ENCODE measurements at regions of chr6 and their contacts with region 1.

Region 1: DNA sequence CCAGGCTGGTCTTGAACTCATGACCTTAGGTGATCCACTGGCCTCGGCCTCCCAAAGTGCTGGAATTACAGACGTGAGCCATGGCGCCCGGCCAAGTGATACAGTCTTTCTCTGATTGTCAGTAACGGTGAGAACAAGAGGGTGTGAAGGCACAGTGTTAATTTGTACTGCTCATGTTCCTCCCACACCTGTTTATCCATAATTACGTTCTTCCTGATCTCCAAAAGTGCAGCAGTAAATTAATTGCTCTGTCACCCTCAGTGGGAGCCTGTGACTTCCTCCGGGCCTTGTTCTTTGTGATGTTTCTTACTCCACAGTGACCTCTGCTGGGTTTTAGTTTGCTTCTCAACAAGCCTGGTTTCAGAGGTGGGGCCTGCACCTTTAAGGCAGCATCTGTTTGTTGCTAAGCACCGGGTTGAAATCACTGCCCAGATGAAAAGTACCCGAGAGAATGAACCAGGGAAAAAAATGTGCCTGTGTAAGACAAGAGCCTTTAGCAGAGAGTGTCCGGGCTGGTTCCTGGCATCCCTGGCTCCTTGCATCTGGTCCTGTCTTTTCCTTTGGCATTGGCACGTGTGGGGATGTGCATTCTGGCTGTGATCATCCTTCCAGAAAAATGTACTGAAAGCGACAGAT is 89.1 kb upstream of the CLDN20 start:
- DNase-seq: peak; percentile 79
- ATAC-seq: peak; percentile 75
- H3K4me3 ChIP-seq: no peak overlapping the region
- H3K4me3 Mint-ChIP-seq: no peak overlapping the region
- H3K27ac ChIP-seq: no peak overlapping the region
- H3K27ac Mint-ChIP-seq: no peak overlapping the region
- H3K4me1 ChIP-seq: peaks cover 0 to 23% of the 10 kb centered on the region in 2 donors
- H3K4me1 Mint-ChIP-seq: peaks cover 37% of the 10 kb centered on the region
- H3K27me3 ChIP-seq: no peaks in the 10 kb centered on the region
- H3K27me3 Mint-ChIP-seq: no peaks in the 10 kb centered on the region
- CTCF ChIP-seq: peak; percentile 60

Region 2: DNA sequence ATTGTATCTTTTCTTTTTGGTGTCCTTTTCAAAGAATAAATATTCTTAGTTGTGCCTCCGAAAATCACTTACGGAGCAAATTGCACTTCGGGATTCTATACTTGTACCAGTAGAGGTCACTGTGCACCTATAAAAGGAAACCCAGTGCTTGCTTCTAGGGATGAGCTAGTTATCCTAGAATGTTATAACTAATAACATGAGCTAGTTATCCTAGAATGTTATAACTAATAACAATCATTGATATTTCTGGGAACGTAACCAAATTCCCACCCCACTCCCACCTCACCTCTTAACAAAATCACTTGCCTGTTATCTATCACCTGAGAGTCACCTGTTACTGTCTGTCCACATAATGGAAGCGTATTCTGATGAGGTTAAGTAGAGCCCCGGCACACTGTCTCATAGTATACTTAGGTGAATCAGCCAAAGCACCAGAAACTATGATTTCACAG is 306.5 kb before region 1 on chr6:
- CTCF ChIA-PET with region 1: interaction called, 9 read pairs
- POLR2A ChIA-PET with region 1: no interaction called
- intact Hi-C with region 1: loop called (anchors 1 kb)
- DNase-seq: peak; percentile 44
- ATAC-seq: no peak
- H3K4me3 ChIP-seq: no peak overlapping the region
- H3K4me3 Mint-ChIP-seq: no peak overlapping the region
- H3K27ac ChIP-seq: no peak overlapping the region
- H3K27ac Mint-ChIP-seq: no peak overlapping the region
- H3K4me1 ChIP-seq: no peaks in the 10 kb centered on the region
- H3K4me1 Mint-ChIP-seq: no peaks in the 10 kb centered on the region
- H3K27me3 ChIP-seq: no peaks in the 10 kb centered on the region
- H3K27me3 Mint-ChIP-seq: no peaks in the 10 kb centered on the region
- CTCF ChIP-seq: peak; percentile 72

Region 3: GRCh38 chr6:154928325-154928922 is 246.3 kb before region 1 on chr6:
- CTCF ChIA-PET with region 1: interaction called, 66 read pairs
- POLR2A ChIA-PET with region 1: no interaction called
- intact Hi-C with region 1: no loop called
- DNase-seq: peak; percentile 66
- ATAC-seq: peak; percentile 54
- H3K4me3 ChIP-seq: no peak overlapping the region
- H3K4me3 Mint-ChIP-seq: no peak overlapping the region
- H3K27ac ChIP-seq: no peak overlapping the region
- H3K27ac Mint-ChIP-seq: no peak overlapping the region
- H3K4me1 ChIP-seq: peaks cover 13% of the 10 kb centered on the region in 2 donors
- H3K4me1 Mint-ChIP-seq: peaks cover 19% of the 10 kb centered on the region
- H3K27me3 ChIP-seq: no peaks in the 10 kb centered on the region
- H3K27me3 Mint-ChIP-seq: no peaks in the 10 kb centered on the region
- CTCF ChIP-seq: peak; percentile 88

Region 4: DNA sequence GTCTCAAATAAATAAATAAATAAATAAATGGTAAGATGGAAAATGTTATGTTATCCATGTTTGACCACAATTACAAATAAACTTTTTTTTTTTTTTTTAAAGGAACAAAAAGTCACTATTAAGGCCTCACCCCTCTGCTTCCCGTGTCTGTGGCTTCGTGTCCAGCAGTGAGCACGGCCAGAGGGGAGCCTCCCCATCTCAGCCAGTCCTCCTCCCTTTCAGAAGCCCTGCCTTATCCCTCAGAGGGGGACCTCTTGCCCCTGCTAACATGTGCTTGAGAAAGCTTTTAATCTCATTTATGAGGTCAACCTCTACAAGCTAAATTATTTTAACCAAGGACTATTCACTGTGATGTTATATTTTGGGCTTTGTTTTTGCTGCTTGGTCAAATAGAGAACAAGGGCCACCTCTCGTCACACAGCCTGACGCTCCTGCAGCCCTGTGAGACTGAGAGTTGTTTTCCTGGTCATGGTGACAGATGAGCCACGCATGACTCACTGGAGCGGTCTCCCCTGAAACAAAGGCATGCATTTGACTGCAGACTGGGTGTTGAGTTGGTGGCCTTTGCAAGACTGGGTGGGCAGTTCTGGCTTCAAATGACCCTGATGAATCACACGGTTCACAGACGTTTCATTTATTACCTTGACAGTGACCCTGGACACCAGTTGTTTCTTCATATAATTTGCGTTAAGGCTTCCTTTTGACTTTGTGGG is 47.8 kb before region 1 on chr6:
- CTCF ChIA-PET with region 1: no interaction called
- POLR2A ChIA-PET with region 1: no interaction called
- intact Hi-C with region 1: no loop called
- DNase-seq: no peak
- ATAC-seq: no peak
- H3K4me3 ChIP-seq: no peak overlapping the region
- H3K4me3 Mint-ChIP-seq: no peak overlapping the region
- H3K27ac ChIP-seq: no peak overlapping the region
- H3K27ac Mint-ChIP-seq: no peak overlapping the region
- H3K4me1 ChIP-seq: no peaks in the 10 kb centered on the region
- H3K4me1 Mint-ChIP-seq: no peaks in the 10 kb centered on the region
- H3K27me3 ChIP-seq: peaks cover 0 to under 1% (median 0%) of the 10 kb centered on the region in 4 experiments
- H3K27me3 Mint-ChIP-seq: no peaks in the 10 kb centered on the region
- CTCF ChIP-seq: no peak

Region 5: GRCh38 chr6:155154158-155154830 is 20.4 kb before region 1 on chr6:
- CTCF ChIA-PET with region 1: no interaction called
- POLR2A ChIA-PET with region 1: no interaction called
- intact Hi-C with region 1: no loop called
- DNase-seq: no peak
- ATAC-seq: no peak
- H3K4me3 ChIP-seq: no peak overlapping the region
- H3K4me3 Mint-ChIP-seq: no peak overlapping the region
- H3K27ac ChIP-seq: no peak overlapping the region
- H3K27ac Mint-ChIP-seq: no peak overlapping the region
- H3K4me1 ChIP-seq: no peaks in the 10 kb centered on the region
- H3K4me1 Mint-ChIP-seq: peaks cover 1% of the 10 kb centered on the region
- H3K27me3 ChIP-seq: no peaks in the 10 kb centered on the region
- H3K27me3 Mint-ChIP-seq: no peaks in the 10 kb centered on the region
- CTCF ChIP-seq: no peak

Region 6: DNA sequence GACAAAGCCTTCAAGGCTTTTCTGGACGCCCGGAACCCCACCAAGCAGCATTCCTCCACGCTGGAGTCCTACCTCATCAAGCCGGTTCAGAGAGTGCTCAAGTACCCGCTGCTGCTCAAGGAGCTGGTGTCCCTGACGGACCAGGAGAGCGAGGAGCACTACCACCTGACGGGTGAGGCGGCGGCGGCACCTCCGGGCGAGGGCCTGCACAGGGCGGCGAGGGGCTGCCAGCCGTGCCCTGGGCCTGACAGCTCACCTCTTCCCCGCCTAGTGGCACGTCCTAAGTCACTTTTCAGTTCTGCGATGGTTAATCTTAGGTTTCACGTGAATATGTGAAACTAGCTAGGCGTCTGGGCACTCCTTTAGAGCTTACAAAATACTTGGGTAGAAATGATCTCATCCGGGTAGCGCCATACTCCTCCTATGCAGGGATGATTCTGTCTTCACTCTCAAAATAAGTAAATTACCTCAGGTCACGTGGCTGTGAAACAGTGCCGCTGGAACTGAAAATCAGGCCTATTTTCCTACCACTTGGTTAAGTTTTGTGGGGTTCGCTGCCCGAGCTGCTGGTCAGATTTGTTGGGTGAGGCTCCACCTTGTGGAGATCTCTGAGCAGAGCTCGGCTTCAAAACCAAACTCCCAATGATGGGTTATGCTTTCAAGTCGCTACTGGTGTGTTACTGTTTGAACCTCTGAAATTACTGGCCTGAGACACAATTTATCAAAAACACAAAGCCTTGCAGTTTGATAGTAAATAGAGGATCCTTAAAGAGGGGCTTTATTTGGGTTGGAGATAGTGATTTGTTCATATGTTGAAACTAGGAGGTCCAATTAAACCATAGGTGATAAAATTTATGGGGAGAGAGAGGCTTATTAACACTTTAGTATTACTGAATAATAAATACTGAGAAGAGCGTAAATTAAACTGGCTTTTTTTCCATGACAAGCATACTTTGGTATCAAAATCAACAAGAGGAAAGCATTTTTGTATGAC is 73.6 kb after region 1 on chr6:
- CTCF ChIA-PET with region 1: interaction called, 92 read pairs
- POLR2A ChIA-PET with region 1: no interaction called
- intact Hi-C with region 1: loop called (anchors 1 kb)
- DNase-seq: peak; percentile 56
- ATAC-seq: peak; percentile 56
- H3K4me3 ChIP-seq: no peak overlapping the region
- H3K4me3 Mint-ChIP-seq: no peak overlapping the region
- H3K27ac ChIP-seq: no peak overlapping the region
- H3K27ac Mint-ChIP-seq: no peak overlapping the region
- H3K4me1 ChIP-seq: no peaks in the 10 kb centered on the region
- H3K4me1 Mint-ChIP-seq: peaks cover 2% of the 10 kb centered on the region
- H3K27me3 ChIP-seq: no peaks in the 10 kb centered on the region
- H3K27me3 Mint-ChIP-seq: no peaks in the 10 kb centered on the region
- CTCF ChIP-seq: peak; percentile 56

Region 7: DNA sequence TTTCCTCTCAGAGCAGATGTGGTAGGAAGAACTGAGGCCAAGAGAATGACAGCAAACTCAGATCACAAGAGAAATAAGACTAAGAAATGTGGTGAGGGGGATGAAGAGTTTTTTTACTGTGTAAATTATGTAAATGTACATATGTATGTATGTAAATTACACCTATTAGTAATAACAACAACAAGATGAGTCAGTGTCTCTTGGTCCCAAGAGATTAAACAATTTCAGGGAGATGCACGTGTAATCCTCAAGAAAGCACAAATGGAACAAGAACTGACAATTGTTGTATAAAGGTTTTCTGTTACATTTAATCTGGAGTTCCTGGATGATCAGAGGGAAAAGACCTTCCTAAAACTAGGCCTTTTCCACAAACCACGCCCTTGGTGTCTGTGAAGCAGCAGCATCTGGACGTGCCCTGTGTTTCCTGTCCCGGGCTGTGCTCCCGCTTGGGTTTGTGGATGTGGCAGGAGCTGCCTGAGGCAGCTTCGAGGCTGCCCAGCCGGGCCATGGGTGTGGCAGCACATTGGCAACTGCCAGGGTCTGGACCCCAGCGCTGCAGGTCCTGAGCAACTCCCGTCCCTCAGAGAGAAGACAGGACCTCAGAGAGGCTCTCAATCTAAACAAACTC is 90.1 kb after region 1 on chr6:
- CTCF ChIA-PET with region 1: interaction called, 11 read pairs
- POLR2A ChIA-PET with region 1: no interaction called
- intact Hi-C with region 1: no loop called
- DNase-seq: no peak
- ATAC-seq: no peak
- H3K4me3 ChIP-seq: no peak overlapping the region
- H3K4me3 Mint-ChIP-seq: no peak overlapping the region
- H3K27ac ChIP-seq: no peak overlapping the region
- H3K27ac Mint-ChIP-seq: no peak overlapping the region
- H3K4me1 ChIP-seq: peaks cover 3 to 5% of the 10 kb centered on the region in 2 donors
- H3K4me1 Mint-ChIP-seq: peaks cover 11% of the 10 kb centered on the region
- H3K27me3 ChIP-seq: no peaks in the 10 kb centered on the region
- H3K27me3 Mint-ChIP-seq: no peaks in the 10 kb centered on the region
- CTCF ChIP-seq: no peak

Region 8: GRCh38 chr6:155314092-155314772 is 139.5 kb after region 1 on chr6 and contains the start of gene TFB1M:
- CTCF ChIA-PET with region 1: interaction called, 15 read pairs
- POLR2A ChIA-PET with region 1: no interaction called
- intact Hi-C with region 1: no loop called
- DNase-seq: peak; percentile 98
- ATAC-seq: peak; percentile 93
- H3K4me3 ChIP-seq: peak within 1 kb of the TSS; percentile 68 to 92 (median 92)
- H3K4me3 Mint-ChIP-seq: peak within 1 kb of the TSS; percentile 100
- H3K27ac ChIP-seq: peak within 1 kb of the TSS; percentile 79 to 84
- H3K27ac Mint-ChIP-seq: peak within 1 kb of the TSS; percentile 97
- H3K4me1 ChIP-seq: peaks cover 4% of the 10 kb centered on the region in 2 donors
- H3K4me1 Mint-ChIP-seq: peaks cover 37% of the 10 kb centered on the region
- H3K27me3 ChIP-seq: no peaks in the 10 kb centered on the region
- H3K27me3 Mint-ChIP-seq: no peaks in the 10 kb centered on the region
- CTCF ChIP-seq: no peak
- total RNA-seq, gene TFB1M: 49.9 and 58.0 TPM in 2 replicates

Region 9: GRCh38 chr6:155530219-155530834 is 355.6 kb after region 1 on chr6:
- CTCF ChIA-PET with region 1: no interaction called
- POLR2A ChIA-PET with region 1: no interaction called
- intact Hi-C with region 1: loop called (anchors 2 kb)
- DNase-seq: peak; percentile 33
- ATAC-seq: no peak
- H3K4me3 ChIP-seq: no peak overlapping the region
- H3K4me3 Mint-ChIP-seq: no peak overlapping the region
- H3K27ac ChIP-seq: no peak overlapping the region
- H3K27ac Mint-ChIP-seq: no peak overlapping the region
- H3K4me1 ChIP-seq: peaks cover 3 to 4% of the 10 kb centered on the region in 2 donors
- H3K4me1 Mint-ChIP-seq: peaks cover 10% of the 10 kb centered on the region
- H3K27me3 ChIP-seq: no peaks in the 10 kb centered on the region
- H3K27me3 Mint-ChIP-seq: no peaks in the 10 kb centered on the region
- CTCF ChIP-seq: peak; percentile 61

Region 10: GRCh38 chr6:156068881-156069280 is 894.2 kb after region 1 on chr6:
- CTCF ChIA-PET with region 1: no interaction called
- POLR2A ChIA-PET with region 1: no interaction called
- intact Hi-C with region 1: no loop called
- DNase-seq: peak; percentile 8
- ATAC-seq: no peak
- H3K4me3 ChIP-seq: no peak overlapping the region
- H3K4me3 Mint-ChIP-seq: no peak overlapping the region
- H3K27ac ChIP-seq: no peak overlapping the region
- H3K27ac Mint-ChIP-seq: no peak overlapping the region
- H3K4me1 ChIP-seq: no peaks in the 10 kb centered on the region
- H3K4me1 Mint-ChIP-seq: peaks cover 6% of the 10 kb centered on the region
- H3K27me3 ChIP-seq: no peaks in the 10 kb centered on the region
- H3K27me3 Mint-ChIP-seq: peaks cover 4% of the 10 kb centered on the region
- CTCF ChIP-seq: no peak